CD8-positive, alpha-beta T cell (primary cell): ENCODE measurements at regions of chr7 and their contacts with region 1.

Region 1: DNA sequence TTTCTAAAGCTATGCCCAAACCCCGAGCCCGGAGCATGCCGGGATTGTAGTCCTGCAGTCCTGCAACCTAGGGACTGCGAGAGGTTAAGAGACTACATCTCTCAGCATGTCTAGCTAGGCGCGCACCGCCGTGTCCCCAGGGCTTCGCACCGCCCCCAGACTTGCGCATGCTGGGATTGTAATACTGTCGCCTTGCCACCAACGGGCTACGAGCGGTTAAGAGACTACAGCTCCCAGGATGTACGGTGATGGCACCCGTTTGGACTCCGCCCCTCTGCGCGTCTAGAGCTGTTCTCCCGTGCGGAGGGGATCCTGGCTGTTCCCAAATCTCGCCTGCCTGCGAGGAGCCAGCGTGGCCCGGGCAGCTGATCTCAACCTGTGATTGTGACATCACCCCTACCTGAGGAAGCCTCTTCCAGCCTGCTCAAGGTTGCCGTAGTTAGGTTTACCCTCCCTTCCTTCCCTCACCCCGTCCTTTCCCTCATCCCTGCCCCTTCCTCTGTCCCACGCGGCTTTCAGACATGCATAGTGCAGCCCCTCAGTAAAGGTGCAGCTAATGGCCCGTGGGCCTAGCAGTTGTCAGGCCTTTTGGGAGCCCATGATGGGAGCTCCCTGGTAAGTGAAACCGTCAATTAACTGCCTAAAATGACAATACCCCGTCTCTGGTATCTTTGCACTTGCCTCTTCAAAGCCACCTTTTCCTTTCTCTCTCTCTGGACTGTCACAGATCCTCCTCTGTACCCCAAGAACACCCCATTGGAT is 6.3 kb upstream of the ZNF736 start:
- DNase-seq: peak; percentile 88 to 97 (median 94)
- ATAC-seq: peak; percentile 98
- H3K4me3 ChIP-seq: peak overlapping the region; percentile 71 to 80
- H3K4me3 Mint-ChIP-seq: peak overlapping the region; percentile 95
- H3K27ac ChIP-seq: peak overlapping the region; percentile 77 to 91
- H3K27ac Mint-ChIP-seq: peak overlapping the region; percentile 99
- H3K4me1 ChIP-seq: peaks cover 14% of the 10 kb centered on the region
- H3K4me1 Mint-ChIP-seq: peaks cover 14% of the 10 kb centered on the region
- H3K27me3 ChIP-seq: no peaks in the 10 kb centered on the region
- H3K27me3 Mint-ChIP-seq: no peaks in the 10 kb centered on the region
- CTCF ChIP-seq: no peak

Region 2: DNA sequence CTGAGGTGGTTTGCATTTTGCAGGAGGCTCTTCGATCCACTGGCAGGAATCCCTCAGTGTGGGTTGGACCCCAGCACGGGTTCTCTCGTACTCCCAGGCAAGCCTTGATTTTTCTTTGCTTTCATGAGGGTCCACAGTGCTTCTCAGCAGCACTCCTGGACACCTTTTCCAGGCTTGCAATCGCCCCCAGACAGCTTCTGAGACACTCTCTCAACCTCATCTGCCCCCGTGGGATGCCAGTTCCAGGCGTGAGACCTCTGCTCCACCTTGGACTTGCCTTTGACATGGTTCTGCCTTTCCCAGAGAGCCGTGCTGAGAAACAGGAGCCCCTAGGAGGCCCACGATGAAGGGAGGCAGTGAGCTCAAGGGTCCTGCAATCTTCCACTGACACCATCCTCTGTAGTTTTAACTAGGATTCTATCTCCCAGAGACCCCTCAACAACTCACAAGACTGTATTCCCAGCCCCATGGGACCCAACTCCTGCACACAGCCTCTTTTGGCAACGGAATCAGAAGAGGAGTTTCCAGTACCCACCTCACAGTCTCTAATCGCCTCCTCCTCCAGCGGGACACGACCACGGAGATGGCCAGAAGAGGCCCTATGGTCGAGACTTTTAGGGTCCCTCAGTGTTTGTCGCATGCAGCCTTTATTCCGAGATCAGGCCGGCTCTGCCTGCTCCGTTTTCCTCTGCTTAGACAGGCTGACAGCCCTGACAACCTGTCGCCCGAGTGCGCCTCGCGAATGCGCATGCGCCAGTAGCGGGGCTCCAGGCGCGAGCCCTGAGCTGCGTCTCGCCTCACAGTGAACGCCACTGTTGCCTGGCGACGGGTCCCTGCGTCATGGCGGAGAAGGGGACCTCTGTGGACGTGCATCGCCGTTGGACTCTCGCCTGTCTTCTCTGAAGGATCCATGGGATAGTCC is 569.6 kb after region 1 on chr7:
- CTCF ChIA-PET with region 1: no interaction called
- POLR2A ChIA-PET with region 1: no interaction called
- intact Hi-C with region 1: no loop called
- DNase-seq: peak; percentile 33 to 83 (median 68)
- ATAC-seq: peak; percentile 87
- H3K4me3 ChIP-seq: peak overlapping the region; percentile 17 to 35
- H3K4me3 Mint-ChIP-seq: peak overlapping the region; percentile 72
- H3K27ac ChIP-seq: no peak overlapping the region
- H3K27ac Mint-ChIP-seq: peak overlapping the region; percentile 6
- H3K4me1 ChIP-seq: peaks cover 5% of the 10 kb centered on the region
- H3K4me1 Mint-ChIP-seq: peaks cover 11% of the 10 kb centered on the region
- H3K27me3 ChIP-seq: no peaks in the 10 kb centered on the region
- H3K27me3 Mint-ChIP-seq: peaks cover 31% of the 10 kb centered on the region
- CTCF ChIP-seq: no peak

Region 3: GRCh38 chr7:65037740-65038678 is 730.6 kb after region 1 on chr7:
- CTCF ChIA-PET with region 1: no interaction called
- POLR2A ChIA-PET with region 1: interaction called, 4 read pairs
- intact Hi-C with region 1: loop called (anchors 1 to 10 kb)
- DNase-seq: peak; percentile 87 to 97 (median 94)
- ATAC-seq: peak; percentile 89
- H3K4me3 ChIP-seq: peak overlapping the region; percentile 52 to 69
- H3K4me3 Mint-ChIP-seq: peak overlapping the region; percentile 79
- H3K27ac ChIP-seq: peak overlapping the region; percentile 62 to 74
- H3K27ac Mint-ChIP-seq: peak overlapping the region; percentile 80
- H3K4me1 ChIP-seq: peaks cover 11% of the 10 kb centered on the region
- H3K4me1 Mint-ChIP-seq: peaks cover 14% of the 10 kb centered on the region
- H3K27me3 ChIP-seq: no peaks in the 10 kb centered on the region
- H3K27me3 Mint-ChIP-seq: no peaks in the 10 kb centered on the region
- CTCF ChIP-seq: peak; percentile 16